Mammary epithelial cell (primary cell): ENCODE measurements at regions of chr9 and their contacts with region 1.

Region 1: DNA sequence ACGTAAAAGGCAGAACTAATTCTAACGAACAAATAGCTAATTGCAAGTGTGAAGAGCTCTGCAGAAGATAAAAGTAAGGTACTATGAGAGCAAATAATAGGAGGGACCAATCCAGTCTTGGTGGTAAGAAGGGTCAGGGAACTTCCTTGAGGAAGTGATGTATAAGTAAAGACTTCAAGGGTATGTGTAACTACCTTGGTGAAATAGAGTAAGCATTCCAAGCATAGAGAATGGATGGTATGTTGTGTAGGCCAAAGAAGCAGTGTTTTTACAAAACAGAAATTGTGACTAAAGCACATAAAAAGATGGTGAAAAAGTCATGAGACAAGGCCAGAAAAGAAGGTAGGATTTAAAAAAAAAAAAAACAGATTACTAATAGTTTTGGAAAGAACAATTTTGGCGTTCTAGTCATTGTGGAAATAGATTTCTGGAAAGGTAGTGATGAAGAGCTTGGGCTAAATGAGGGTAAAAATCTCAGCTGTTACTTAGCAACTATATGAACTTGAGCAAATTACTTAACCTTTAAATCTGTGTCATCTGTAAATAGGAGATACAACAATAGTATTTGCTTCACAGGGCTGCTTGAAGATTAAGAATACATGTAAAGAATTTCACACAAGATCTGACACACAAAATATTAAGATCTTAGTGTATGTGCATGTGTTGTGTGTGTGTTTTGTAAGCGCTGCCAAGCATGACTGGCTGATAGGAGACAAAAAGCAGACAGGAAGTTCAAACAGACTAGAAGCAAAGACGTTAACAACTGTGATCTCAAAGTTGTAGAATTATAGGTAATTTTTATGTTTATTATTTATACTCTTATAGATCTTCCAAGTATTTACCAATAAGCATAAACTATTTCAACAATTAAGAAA is 73.5 kb downstream of the NR6A1 start:
- DNase-seq: peak; percentile 40
- H3K4me3 ChIP-seq: peak overlapping the region in 2 of 3 experiments; percentile 40 to 57
- H3K27ac ChIP-seq: peak overlapping the region; percentile 89
- H3K4me1 ChIP-seq: peaks cover 33% of the 10 kb centered on the region
- H3K27me3 ChIP-seq: no peaks in the 10 kb centered on the region
- CTCF ChIP-seq: no peak

Region 2: GRCh38 chr9:124652203-124652992 is 45.2 kb before region 1 on chr9:
- CTCF ChIA-PET with region 1: no interaction called
- dilution Hi-C with region 1: no loop called
- in situ Hi-C with region 1: loop called in 1 of 2 experiments (anchors 10 kb)
- intact Hi-C with region 1: loop called (anchors 1 kb)
- DNase-seq: peak; percentile 96
- H3K4me3 ChIP-seq: no peak overlapping the region
- H3K27ac ChIP-seq: peak overlapping the region; percentile 73
- H3K4me1 ChIP-seq: peaks cover 22% of the 10 kb centered on the region
- H3K27me3 ChIP-seq: no peaks in the 10 kb centered on the region
- CTCF ChIP-seq: no peak

Region 3: DNA sequence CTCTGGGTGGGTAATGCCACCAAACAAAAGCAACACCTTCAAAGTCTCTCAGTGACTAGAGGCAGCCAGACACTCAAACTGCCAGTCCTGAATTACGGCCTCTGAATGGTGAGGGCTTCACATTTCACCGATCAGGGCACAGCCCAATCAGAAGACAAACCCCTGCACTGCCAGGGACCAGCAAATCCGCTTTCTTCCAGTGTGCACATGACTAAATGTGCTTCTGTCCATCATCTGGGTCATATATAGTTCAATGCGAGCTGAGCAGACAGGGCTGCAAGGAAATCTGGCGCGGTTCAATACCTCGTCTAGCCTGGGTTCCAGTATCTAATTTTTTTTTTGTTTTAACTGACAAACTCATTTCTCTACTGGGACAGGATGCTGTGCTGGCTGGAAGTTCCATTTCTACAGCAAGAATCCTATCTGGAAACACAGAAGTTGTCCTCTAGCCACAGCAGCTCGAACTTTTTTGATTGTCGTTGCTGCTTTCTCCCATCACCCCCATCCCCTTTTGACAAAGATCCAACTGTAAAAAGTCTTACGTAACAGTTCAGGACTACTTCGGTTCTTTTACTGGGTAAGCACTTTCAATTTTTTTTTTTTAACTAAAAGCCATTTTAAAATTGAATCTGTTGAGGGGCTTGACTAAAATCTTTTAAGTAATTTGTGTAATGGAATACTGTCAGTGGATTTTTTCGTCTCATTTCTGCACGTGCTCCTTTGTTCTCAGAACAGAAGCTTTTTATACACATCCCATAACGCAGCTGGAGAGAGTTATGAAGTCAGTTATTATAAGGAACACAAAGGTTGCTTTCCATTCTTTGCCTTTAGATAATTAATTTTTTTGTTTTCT is 39.2 kb before region 1 on chr9:
- CTCF ChIA-PET with region 1: no interaction called
- dilution Hi-C with region 1: no loop called
- in situ Hi-C with region 1: loop called in 1 of 2 experiments (anchors 10 kb)
- intact Hi-C with region 1: loop called (anchors 1 kb)
- DNase-seq: peak; percentile 94
- H3K4me3 ChIP-seq: peak overlapping the region; percentile 49 to 95 (median 73)
- H3K27ac ChIP-seq: peak overlapping the region; percentile 95
- H3K4me1 ChIP-seq: peaks cover 17% of the 10 kb centered on the region
- H3K27me3 ChIP-seq: no peaks in the 10 kb centered on the region
- CTCF ChIP-seq: no peak

Region 4: GRCh38 chr9:124671861-124672260 is 25.7 kb before region 1 on chr9:
- CTCF ChIA-PET with region 1: no interaction called
- dilution Hi-C with region 1: no loop called
- in situ Hi-C with region 1: no loop called
- intact Hi-C with region 1: no loop called
- DNase-seq: no peak
- H3K4me3 ChIP-seq: no peak overlapping the region
- H3K27ac ChIP-seq: no peak overlapping the region
- H3K4me1 ChIP-seq: no peaks in the 10 kb centered on the region
- H3K27me3 ChIP-seq: no peaks in the 10 kb centered on the region
- CTCF ChIP-seq: no peak

Region 5: GRCh38 chr9:124735121-124735520 is 37.6 kb after region 1 on chr9:
- CTCF ChIA-PET with region 1: no interaction called
- dilution Hi-C with region 1: no loop called
- in situ Hi-C with region 1: no loop called
- intact Hi-C with region 1: no loop called
- DNase-seq: peak; percentile 67
- H3K4me3 ChIP-seq: no peak overlapping the region
- H3K27ac ChIP-seq: no peak overlapping the region
- H3K4me1 ChIP-seq: peaks cover 19% of the 10 kb centered on the region
- H3K27me3 ChIP-seq: no peaks in the 10 kb centered on the region
- CTCF ChIP-seq: no peak

Region 6: DNA sequence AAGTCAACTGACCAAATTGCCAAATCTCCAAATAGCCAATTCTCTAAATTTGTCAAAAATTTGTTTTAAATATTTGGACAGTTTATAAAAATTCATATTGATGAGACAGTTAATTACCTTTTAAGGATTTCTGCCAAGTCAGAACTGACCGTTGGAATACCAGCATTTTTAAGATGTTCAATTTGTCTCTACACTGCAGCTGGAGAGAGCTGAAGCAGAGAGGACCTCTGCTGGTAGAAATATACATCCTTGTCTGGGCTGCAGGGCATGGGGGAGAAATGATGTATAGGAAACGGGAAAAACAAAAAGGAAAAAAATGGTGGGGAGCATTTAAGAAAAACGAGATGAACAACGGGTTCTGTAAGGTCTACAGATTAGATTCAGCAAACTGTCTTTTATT is 56.7 kb after region 1 on chr9:
- CTCF ChIA-PET with region 1: no interaction called
- dilution Hi-C with region 1: no loop called
- in situ Hi-C with region 1: no loop called
- intact Hi-C with region 1: no loop called
- DNase-seq: no peak
- H3K4me3 ChIP-seq: no peak overlapping the region
- H3K27ac ChIP-seq: no peak overlapping the region
- H3K4me1 ChIP-seq: peaks cover 14% of the 10 kb centered on the region
- H3K27me3 ChIP-seq: no peaks in the 10 kb centered on the region
- CTCF ChIP-seq: peak; percentile 36 to 65

Region 7: DNA sequence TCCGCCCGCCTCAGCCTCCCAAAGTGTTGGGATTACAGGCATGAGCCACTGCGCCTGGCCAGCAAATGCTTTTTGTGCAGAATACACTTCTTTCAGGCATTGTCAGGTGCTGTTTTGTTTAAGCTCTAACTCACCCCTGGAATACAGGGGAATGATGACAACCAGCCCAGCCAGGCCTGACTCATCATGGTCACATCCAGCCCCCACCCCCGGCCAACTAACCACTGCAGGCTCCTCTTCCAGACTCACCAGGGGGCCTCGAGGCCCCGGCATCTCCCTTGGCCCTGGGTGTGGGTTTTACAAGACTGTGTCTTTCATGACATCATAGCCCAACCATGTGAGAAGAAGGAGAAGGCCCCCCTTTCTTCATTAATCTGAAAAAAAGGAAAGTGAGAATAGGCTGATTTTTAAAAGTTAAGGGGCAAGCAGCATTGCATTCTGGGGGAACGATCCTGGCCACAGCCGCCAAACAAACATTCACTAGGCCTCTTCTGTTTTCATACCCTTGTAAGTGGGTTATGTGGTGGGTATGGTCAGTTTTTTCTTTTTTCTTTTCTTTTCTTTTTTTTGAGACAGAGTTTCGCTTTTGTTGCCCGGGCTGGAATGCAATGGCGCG is 114.9 kb after region 1 on chr9:
- CTCF ChIA-PET with region 1: no interaction called
- dilution Hi-C with region 1: no loop called
- in situ Hi-C with region 1: no loop called
- intact Hi-C with region 1: no loop called
- DNase-seq: peak; percentile 90
- H3K4me3 ChIP-seq: no peak overlapping the region
- H3K27ac ChIP-seq: peak overlapping the region; percentile 29
- H3K4me1 ChIP-seq: peaks cover 52% of the 10 kb centered on the region
- H3K27me3 ChIP-seq: no peaks in the 10 kb centered on the region
- CTCF ChIP-seq: no peak